Ascending aorta (tissue), 2 donors: ENCODE measurements at regions of chr10 and their contacts with region 1.

Region 1: GRCh38 chr10:119370111-119370741 is 162.9 kb downstream of the GRK5 start:
- DNase-seq: peak in 1 of 2 donors; percentile 83
- H3K4me3 ChIP-seq: peak overlapping the region; percentile 17 to 44
- H3K27ac ChIP-seq: peak overlapping the region; percentile 64 to 81
- H3K4me1 ChIP-seq: peaks cover 33 to 57% of the 10 kb centered on the region in 2 donors
- H3K27me3 ChIP-seq: no peaks in the 10 kb centered on the region
- CTCF ChIP-seq: no peak

Region 2: GRCh38 chr10:118950190-118950680 is 420.0 kb before region 1 on chr10:
- intact Hi-C with region 1: no loop called
- DNase-seq: no peak
- H3K4me3 ChIP-seq: no peak overlapping the region
- H3K27ac ChIP-seq: no peak overlapping the region
- H3K4me1 ChIP-seq: no peaks in the 10 kb centered on the region
- H3K27me3 ChIP-seq: no peaks in the 10 kb centered on the region
- CTCF ChIP-seq: no peak

Region 3: DNA sequence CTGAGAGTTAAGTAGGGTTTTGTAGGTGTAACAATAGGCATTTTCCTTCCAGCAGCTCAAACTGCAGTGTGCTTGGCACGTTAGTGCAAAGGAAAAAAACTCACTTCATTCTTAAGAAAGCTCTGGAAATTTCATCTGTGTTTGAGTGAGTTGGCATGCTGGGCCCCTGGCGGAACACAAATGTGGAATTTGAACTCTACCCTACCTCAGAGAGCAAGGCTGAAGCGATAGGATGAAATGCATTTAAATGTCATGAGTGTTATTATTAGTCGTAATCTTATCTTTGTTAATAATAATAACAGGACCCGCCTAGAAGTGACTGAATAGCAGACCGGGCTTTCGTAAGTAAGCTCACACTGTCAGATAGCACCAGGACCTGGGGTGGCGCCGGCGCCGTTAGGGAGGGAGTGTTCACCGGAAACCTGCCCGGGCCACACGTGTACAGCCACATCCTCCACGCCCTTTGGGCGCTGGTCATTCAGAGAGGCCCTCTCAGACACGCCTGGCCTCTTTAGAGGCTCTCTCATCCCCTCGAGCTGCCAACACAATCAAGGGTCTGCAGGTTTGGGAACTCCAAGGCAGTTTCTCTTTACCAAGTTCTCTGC is 99.4 kb before region 1 on chr10:
- intact Hi-C with region 1: loop called (anchors 5 kb)
- DNase-seq: peak in 1 of 2 donors; percentile 90
- H3K4me3 ChIP-seq: peak overlapping the region in 1 of 2 donors; percentile 47
- H3K27ac ChIP-seq: peak overlapping the region; percentile 76 to 90
- H3K4me1 ChIP-seq: peaks cover 24 to 35% of the 10 kb centered on the region in 2 donors
- H3K27me3 ChIP-seq: no peaks in the 10 kb centered on the region
- CTCF ChIP-seq: no peak

Region 4: DNA sequence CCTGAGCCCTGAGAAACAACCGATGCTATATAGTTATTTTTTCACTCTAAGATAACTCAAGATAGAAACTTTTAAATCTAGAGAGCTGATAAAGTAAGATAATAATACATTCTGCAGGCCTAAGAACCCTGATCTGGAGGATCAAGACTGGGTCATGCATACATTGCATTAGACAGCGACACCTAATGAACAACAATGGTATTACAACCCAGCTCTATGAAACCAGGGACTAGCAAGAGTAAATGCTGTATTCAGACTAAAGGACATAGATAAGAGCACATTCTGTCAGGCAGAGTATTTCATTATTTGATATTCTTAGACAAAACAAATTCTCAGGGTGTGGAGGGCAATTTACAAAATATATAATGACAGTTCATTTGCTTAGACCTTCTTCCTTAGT is 14.3 kb before region 1 on chr10:
- intact Hi-C with region 1: no loop called
- DNase-seq: no peak
- H3K4me3 ChIP-seq: no peak overlapping the region
- H3K27ac ChIP-seq: no peak overlapping the region
- H3K4me1 ChIP-seq: peaks cover 16 to 23% of the 10 kb centered on the region in 2 donors
- H3K27me3 ChIP-seq: no peaks in the 10 kb centered on the region
- CTCF ChIP-seq: peak in 1 of 3 experiments; percentile 36

Region 5: GRCh38 chr10:119409866-119410299 is 39.7 kb after region 1 on chr10:
- intact Hi-C with region 1: loop called (anchors 5 kb)
- DNase-seq: no peak
- H3K4me3 ChIP-seq: no peak overlapping the region
- H3K27ac ChIP-seq: peak overlapping the region in 1 of 2 donors; percentile 46
- H3K4me1 ChIP-seq: peaks cover 0 to 20% of the 10 kb centered on the region in 2 donors
- H3K27me3 ChIP-seq: no peaks in the 10 kb centered on the region
- CTCF ChIP-seq: no peak